Right ventricle myocardium inferior (tissue), 1 donor: ENCODE measurements at regions of chr15 and their contacts with region 1.

Region 1: GRCh38 chr15:41230650-41231533 is at the starts of genes CHP1 and EXD1:
- DNase-seq: peak; percentile 99
- ATAC-seq: peak; percentile 100
- total RNA-seq, gene CHP1: 123 TPM
- total RNA-seq, gene EXD1: not detected

Region 2: DNA sequence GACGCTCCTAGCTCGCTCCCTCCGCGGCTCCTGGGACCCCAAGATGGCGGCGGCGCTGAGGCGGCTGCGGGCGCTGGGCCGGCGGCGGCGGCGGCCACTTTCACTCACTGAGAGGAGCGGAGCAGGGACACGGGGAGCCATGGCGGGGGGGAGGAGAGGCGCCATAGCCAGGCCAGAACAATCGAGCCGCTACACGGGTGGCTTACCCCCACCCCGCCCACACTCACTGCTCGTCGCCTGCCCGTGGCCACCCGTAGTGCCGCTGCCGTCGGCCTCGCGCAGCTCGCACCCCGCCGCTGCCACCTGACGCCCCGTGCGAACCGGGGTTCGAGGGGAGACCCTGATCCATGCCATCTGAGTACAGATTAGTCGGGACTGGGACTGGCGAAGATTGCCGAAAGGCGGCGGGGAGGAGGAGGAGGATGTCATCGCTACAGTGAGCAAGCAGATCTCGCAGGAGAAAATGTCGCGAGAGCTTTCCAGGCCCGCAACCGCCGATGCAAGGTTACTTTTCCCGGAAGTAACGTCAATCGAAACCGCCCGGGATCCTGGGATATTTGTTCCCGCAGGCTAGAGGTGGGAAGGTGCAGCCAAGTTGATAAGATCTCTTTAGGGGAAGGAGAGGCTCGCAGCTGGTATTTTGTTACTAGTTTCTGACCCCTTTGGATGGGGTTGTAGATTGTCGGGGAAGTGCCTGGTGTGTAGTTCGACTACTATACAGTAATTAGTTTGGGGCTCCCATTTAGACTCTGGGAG is 114.6 kb before region 1 on chr15 and contains the start of gene INO80:
- intact Hi-C with region 1: loop called (anchors 1 kb)
- DNase-seq: peak; percentile 97
- ATAC-seq: peak; percentile 97
- total RNA-seq, gene INO80: 10.7 TPM

Region 3: DNA sequence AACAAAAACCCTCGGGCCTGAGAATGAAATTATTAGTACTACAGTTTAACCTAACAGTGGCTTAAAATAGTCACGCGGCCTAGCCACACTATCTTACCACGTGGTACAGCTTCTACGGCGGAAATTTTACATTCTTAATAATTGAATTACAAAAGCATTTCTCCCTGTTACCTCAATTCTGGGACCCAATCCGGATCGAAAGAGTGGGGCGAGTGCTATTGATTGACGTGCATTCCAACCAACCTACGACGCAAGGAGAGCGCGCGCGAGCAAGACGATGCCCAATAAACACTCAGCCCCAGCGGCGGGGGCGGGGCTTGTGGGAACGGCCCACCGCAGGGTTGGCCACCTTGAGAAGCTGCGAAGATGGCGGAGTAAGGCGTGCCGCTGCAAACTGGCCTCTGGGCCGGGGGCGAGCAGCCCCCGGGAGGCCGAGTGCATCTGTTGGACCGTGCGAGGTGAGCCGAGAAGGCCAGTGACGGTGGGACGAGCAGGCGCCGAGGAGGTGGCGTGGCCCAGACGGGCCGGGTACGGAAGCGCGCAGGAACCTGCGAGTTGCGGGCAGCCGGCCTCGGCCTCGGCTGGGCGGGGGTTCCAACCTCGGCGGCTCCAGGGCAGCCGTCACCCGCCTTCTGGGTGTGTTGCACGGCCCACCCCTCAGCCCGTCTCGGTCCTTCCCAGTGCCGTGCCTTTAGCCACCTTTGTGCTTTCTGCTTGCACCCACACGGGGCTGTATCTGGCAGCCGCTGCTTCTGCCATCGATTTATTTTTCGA is 52.9 kb after region 1 on chr15:
- intact Hi-C with region 1: loop called (anchors 1 kb)
- DNase-seq: peak; percentile 99
- ATAC-seq: peak; percentile 99

Region 4: GRCh38 chr15:41309226-41309905 is 78.5 kb after region 1 on chr15:
- intact Hi-C with region 1: no loop called
- DNase-seq: no peak
- ATAC-seq: no peak

Region 5: GRCh38 chr15:41331833-41332787 is 101.2 kb after region 1 on chr15 and contains the start of gene OIP5:
- intact Hi-C with region 1: loop called (anchors 2 kb)
- DNase-seq: peak; percentile 99
- ATAC-seq: peak; percentile 100
- total RNA-seq, gene OIP5: 0.51 TPM

Region 6: GRCh38 chr15:41347236-41347635 is 116.3 kb after region 1 on chr15:
- intact Hi-C with region 1: no loop called
- DNase-seq: no peak
- ATAC-seq: no peak